Activated T-helper 1 cell treated with anti-CD3 and anti-CD28 coated beads, Interleukin-12 subunit alpha, Interleukin-12 subunit beta, Interleukin-2, Interleukin-4 antibody, amounts not matched to agents 30 ng/mL and 10 ng/mL and 1 ng/mL, durations not matched to agents 14 hours and 24 hours and 36 hours (primary cell): ENCODE measurements at regions of chr15 and their contacts with region 1.

Region 1: DNA sequence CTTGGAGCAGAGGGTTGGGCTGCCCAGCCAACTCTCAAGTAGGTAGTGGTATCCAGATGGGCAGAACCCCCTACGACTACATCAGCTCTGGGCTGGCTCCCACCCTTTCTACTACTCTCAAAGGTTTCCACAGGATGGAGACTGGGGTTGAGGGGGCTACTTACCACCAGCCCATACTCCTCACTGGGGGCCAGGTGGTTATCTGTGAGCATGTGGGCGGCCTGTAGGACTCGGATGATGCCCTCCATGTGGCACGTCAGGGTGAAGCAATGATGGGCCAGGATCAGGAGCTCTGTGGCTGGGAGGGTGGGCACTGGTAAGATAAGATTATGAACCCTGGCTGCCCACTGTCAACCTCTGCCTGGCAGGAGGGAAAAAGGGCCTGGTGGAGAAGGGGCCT is 33.4 kb downstream of the EIF3J start:
- DNase-seq: no peak
- H3K4me3 Mint-ChIP-seq: no peak overlapping the region
- H3K27ac Mint-ChIP-seq: no peak overlapping the region
- H3K4me1 Mint-ChIP-seq: peaks cover 11% of the 10 kb centered on the region
- H3K27me3 Mint-ChIP-seq: no peaks in the 10 kb centered on the region

Region 2: GRCh38 chr15:44554934-44555723 is 15.2 kb before region 1 on chr15:
- intact Hi-C with region 1: loop called (anchors 1 kb)
- DNase-seq: no peak
- H3K4me3 Mint-ChIP-seq: no peak overlapping the region
- H3K27ac Mint-ChIP-seq: peak overlapping the region; percentile 14
- H3K4me1 Mint-ChIP-seq: peaks cover 21% of the 10 kb centered on the region
- H3K27me3 Mint-ChIP-seq: no peaks in the 10 kb centered on the region

Region 3: GRCh38 chr15:45022871-45023658 is 452.7 kb after region 1 on chr15 and contains the start of gene SORD:
- intact Hi-C with region 1: loop called (anchors 5 kb)
- DNase-seq: peak; percentile 86
- H3K4me3 Mint-ChIP-seq: peak within 1 kb of the TSS; percentile 87
- H3K27ac Mint-ChIP-seq: peak within 1 kb of the TSS; percentile 81
- H3K4me1 Mint-ChIP-seq: peaks cover 16% of the 10 kb centered on the region
- H3K27me3 Mint-ChIP-seq: peaks cover 13% of the 10 kb centered on the region
- total RNA-seq, gene SORD: 19.9 and 21.5 TPM in 2 replicates